ENCODE measurements at regions of chr7 and their contacts with region 1.

Region 1: GRCh38 chr7:47818796-47819606 is 129.3 kb downstream of the PKD1L1 start:
- DNase-seq: peak; percentile 49 to 84 (median 66)
- H3K4me3 ChIP-seq: no peak overlapping the region
- H3K27ac ChIP-seq: no peak overlapping the region
- H3K27me3 ChIP-seq: no peaks in the 10 kb centered on the region
- CTCF ChIP-seq: peak; percentile 76 to 99 (median 96)

Region 2: DNA sequence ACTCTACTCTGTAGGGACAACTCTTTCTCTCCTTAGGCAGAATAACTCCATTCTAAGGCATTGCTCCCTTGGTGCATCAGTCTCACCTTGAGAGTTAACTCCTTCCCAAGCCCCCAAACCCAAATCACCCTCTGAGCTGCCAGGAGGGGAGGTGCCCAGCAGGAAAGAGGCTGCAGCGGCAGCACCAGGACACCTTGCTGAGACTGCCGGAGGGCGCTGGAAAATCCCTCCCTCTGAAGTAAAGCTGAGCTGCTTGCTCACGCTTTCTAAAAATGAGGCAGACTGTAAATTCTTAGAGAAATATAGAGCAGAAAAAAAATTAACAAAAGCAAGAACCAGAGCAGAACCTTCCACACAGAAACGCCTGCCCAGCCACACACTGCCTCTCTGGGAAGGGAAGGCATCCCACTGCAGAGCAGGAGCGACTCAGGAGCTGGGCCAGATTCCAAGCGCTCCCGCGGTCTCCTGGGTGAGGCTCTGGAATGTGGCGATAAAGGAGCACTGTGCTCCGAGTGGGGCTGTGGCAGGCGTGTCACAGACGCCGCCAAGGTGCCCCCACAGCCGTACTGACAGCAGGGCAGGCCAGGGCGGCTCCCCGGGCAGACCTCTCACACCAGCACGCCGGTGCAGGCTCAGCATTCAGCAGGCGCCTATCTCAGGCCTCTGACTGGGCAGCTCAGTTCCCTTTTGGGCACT is 439.2 kb before region 1 on chr7:
- intact Hi-C with region 1: loop called in 1 of 2 experiments (anchors 5 kb)
- DNase-seq: peak in 7 of 10 donors; percentile 48 to 75 (median 68)
- H3K4me3 ChIP-seq: peak overlapping the region in 50 of 59 donors; percentile 4 to 59 (median 35)
- H3K27ac ChIP-seq: peak overlapping the region in 41 of 59 donors; percentile 1 to 79 (median 55)
- H3K27me3 ChIP-seq: peaks cover 0 to 66% (median 0%) of the 10 kb centered on the region in 45 donors
- CTCF ChIP-seq: no peak

Region 3: DNA sequence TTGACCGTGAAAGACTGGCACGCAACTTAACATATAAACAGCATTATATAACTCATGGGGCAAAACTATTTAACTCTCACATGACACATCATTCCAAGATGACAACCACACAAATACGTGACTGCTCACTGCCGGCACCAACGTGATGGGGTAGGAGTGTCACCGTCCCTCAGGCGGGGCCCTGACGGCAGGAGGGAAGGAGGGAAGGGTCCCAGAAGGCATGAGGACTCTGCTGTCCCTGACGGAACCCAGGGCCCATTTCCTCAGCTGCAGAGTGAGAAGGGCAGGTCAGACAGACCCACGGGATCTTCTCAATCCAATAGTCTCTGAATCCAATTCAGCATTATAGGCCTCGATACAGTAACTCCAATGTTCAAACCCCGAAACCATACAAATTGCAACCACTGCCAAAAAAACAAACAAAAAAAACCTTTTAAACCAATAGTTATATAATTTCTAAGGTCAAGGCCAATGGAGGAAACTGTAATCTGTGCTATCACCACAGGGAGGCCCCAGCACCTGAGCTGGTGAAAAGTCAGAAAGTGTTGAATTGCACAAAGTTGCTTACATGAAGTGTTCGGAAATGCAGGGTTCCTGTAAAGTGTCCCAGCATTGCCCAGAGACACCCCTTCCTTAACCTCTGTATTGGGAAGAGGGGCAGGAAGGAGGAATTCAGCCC is 374.5 kb before region 1 on chr7:
- intact Hi-C with region 1: loop called in 1 of 2 experiments (anchors 10 kb)
- DNase-seq: peak in 1 of 10 donors; percentile 34
- H3K4me3 ChIP-seq: no peak overlapping the region
- H3K27ac ChIP-seq: no peak overlapping the region
- H3K27me3 ChIP-seq: peaks cover 0 to 37% (median 0%) of the 10 kb centered on the region in 45 donors
- CTCF ChIP-seq: peak in 48 of 56 donors; percentile 16 to 58 (median 42)

Region 4: DNA sequence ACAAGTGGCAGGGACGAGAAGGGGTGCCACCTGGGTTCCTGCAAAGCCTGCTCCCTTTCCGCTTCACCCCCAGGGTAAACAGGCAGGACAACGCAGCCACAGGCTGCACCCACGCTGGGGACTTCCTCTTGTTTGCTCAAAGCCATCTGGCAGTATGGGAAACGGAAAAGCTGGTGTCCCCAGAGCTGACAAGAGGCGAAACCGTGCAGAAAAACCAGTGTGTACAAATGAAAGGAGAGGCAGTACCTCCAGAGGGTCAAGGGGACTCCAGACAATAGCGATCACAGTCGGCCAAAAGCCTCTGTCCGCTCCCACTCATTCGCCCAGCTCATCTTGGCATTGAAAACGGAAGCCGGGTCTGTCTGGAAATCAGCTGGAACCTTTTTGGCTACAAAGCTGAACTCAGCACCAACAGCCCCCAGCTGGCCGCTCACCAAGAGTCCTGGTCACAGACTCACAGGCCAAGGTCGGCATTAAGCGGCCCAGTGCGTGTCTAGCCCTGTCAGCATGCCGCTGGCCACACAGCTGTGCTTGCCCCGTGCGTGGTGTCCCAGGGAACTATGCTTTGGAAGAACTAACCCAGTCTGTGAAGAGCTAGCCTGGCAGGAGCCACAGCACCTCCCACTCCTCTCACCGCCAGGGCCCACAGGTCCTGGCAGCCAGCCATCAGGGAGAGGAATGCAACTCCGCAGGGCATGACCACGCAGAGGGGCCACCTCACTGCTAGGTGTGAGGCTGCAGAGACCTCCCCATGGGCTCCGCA is 247.5 kb before region 1 on chr7:
- intact Hi-C with region 1: loop called in 1 of 2 experiments (anchors 10 kb)
- DNase-seq: peak in 5 of 10 donors; percentile 29 to 61 (median 45)
- H3K4me3 ChIP-seq: peak overlapping the region in 21 of 59 donors; percentile 4 to 42 (median 21)
- H3K27ac ChIP-seq: peak overlapping the region in 52 of 59 donors; percentile 0 to 82 (median 63)
- H3K27me3 ChIP-seq: no peaks in the 10 kb centered on the region
- CTCF ChIP-seq: no peak

Region 5: DNA sequence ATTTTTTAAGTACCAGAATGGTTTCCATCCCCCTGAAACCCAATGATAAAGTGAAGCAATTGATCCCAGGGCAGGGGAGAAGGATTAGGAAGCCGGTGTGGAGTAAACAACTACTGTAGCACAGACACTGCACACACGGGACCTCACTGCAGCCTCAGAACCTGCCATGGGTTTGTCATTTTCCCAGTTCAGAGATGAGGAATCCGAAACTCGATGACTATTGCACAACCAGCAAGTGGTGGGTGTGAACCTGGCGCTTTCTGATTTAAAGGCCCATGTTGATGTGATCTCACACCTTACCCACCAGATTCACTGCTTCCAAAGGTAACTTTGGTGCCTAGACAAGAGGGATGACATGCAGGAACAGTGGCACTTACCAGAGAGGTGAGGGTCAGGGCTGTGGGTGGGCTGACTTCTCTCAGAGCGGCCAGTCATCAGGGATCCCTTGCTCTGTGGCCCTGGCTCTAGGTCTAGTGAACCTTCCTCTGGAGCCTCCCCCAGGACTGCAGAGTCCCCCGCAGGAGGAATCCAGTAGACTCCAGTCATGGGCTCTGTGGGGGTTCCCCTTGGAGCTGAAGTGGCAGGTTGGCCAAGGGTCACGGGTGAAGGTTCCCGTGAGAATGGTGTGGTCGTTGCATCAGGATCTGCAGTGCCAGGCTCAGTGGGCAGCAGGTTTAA is 66.4 kb after region 1 on chr7:
- intact Hi-C with region 1: no loop called
- DNase-seq: no peak
- H3K4me3 ChIP-seq: no peak overlapping the region
- H3K27ac ChIP-seq: no peak overlapping the region
- H3K27me3 ChIP-seq: no peaks in the 10 kb centered on the region
- CTCF ChIP-seq: no peak

Region 6: DNA sequence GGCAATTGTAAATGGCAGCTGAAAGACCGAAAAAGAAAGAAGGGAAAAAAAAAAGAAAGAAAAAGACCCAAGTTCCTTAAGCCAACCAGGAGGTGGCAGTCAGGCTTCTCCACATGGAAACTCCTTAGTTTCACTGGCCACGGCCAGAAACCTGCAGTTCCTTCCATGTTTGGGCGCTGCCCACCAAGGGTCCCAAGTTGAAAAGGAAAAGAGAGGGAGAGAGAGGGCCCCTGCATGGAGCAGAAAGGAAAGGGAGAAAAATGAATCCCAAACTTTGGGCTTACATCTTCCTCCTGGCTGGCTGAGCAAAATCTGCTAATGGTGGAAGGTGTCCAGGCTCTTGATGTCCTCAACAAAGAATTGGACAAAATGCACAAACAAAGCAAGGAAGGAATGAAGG is 320.5 kb after region 1 on chr7:
- intact Hi-C with region 1: no loop called
- DNase-seq: no peak
- H3K4me3 ChIP-seq: no peak overlapping the region
- H3K27ac ChIP-seq: no peak overlapping the region
- H3K27me3 ChIP-seq: peaks cover 0 to 5% (median 0%) of the 10 kb centered on the region in 45 donors
- CTCF ChIP-seq: no peak